GM12878 (cell line): ENCODE measurements at regions of chr2 and their contacts with region 1.

Region 1: GRCh38 chr2:126527836-126528507 is 128.0 kb upstream of the GYPC start:
- DNase-seq: peak; percentile 11
- ATAC-seq: peak; percentile 91
- H3K4me3 ChIP-seq: no peak overlapping the region
- H3K27ac ChIP-seq: no peak overlapping the region
- H3K4me1 ChIP-seq: no peaks in the 10 kb centered on the region
- H3K27me3 ChIP-seq: no peaks in the 10 kb centered on the region
- CTCF ChIP-seq: peak; percentile 62 to 72 (median 71)
- EP300 ChIP-seq: no peak
- POLR2A ChIP-seq: no peak
- RAD21 ChIP-seq: peak; percentile 91

Region 2: GRCh38 chr2:126444512-126444911 is 83.5 kb before region 1 on chr2:
- CTCF ChIA-PET with region 1: no interaction called
- POLR2A ChIA-PET with region 1: no interaction called
- RAD21 ChIA-PET with region 1: no interaction called
- SMC1A ChIA-PET with region 1: no interaction called
- in situ Hi-C with region 1: no loop called
- intact Hi-C with region 1: no loop called
- DNase-seq: no peak
- ATAC-seq: no peak
- H3K4me3 ChIP-seq: no peak overlapping the region
- H3K27ac ChIP-seq: no peak overlapping the region
- H3K4me1 ChIP-seq: no peaks in the 10 kb centered on the region
- H3K27me3 ChIP-seq: no peaks in the 10 kb centered on the region
- CTCF ChIP-seq: no peak
- EP300 ChIP-seq: no peak
- POLR2A ChIP-seq: no peak
- RAD21 ChIP-seq: no peak

Region 3: DNA sequence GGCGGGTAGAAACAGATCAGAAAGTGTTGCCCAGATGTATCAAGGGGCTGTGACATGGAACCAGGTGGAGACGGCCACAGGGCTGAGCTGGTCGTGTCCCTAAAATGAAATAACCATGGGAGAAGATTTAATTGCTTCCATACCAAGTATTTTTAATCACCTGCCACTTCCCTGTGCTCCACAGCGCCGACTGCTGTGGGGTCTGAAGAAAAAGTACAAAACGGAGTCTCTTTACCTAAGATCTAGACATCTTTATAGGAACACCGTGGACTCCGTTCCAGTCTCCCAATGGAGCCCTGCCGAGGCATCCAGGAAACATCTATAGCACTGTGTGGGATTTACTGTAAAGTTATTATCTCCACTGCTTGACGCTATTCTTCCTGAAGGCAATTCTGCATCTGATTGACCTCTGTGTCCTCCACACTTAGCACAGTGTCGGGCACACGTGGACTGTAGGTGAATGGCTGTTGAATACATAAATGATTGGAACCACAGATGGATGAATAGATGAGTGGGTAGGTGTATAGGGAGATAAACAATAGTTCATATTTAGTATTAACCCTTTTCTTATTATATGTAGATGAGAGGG is 106.4 kb after region 1 on chr2:
- CTCF ChIA-PET with region 1: interaction called, 84 read pairs
- POLR2A ChIA-PET with region 1: no interaction called
- RAD21 ChIA-PET with region 1: interaction called, 17 read pairs
- SMC1A ChIA-PET with region 1: interaction called, 40 read pairs
- in situ Hi-C with region 1: no loop called
- intact Hi-C with region 1: loop called (anchors 1 kb)
- DNase-seq: no peak
- ATAC-seq: peak; percentile 64
- H3K4me3 ChIP-seq: no peak overlapping the region
- H3K27ac ChIP-seq: no peak overlapping the region
- H3K4me1 ChIP-seq: no peaks in the 10 kb centered on the region
- H3K27me3 ChIP-seq: no peaks in the 10 kb centered on the region
- CTCF ChIP-seq: peak; percentile 61 to 69 (median 67); a peak in 5 of 6 replicates
- EP300 ChIP-seq: no peak
- POLR2A ChIP-seq: no peak
- RAD21 ChIP-seq: peak; percentile 65

Region 4: GRCh38 chr2:126657636-126658318 is 129.8 kb after region 1 on chr2:
- CTCF ChIA-PET with region 1: interaction called, 10 read pairs
- POLR2A ChIA-PET with region 1: no interaction called
- RAD21 ChIA-PET with region 1: no interaction called
- SMC1A ChIA-PET with region 1: interaction called, 7 read pairs
- in situ Hi-C with region 1: no loop called
- intact Hi-C with region 1: no loop called
- DNase-seq: peak; percentile 61
- ATAC-seq: peak; percentile 80
- H3K4me3 ChIP-seq: peak overlapping the region; percentile 97
- H3K27ac ChIP-seq: peak overlapping the region; percentile 96
- H3K4me1 ChIP-seq: peaks cover 40% of the 10 kb centered on the region
- H3K27me3 ChIP-seq: no peaks in the 10 kb centered on the region
- CTCF ChIP-seq: no peak
- EP300 ChIP-seq: 0 out of 4 replicates have a peak, but pooled peaks of 1 of the 2 experiments have one; percentile 24
- POLR2A ChIP-seq: peak; percentile 81
- RAD21 ChIP-seq: no peak

Region 5: DNA sequence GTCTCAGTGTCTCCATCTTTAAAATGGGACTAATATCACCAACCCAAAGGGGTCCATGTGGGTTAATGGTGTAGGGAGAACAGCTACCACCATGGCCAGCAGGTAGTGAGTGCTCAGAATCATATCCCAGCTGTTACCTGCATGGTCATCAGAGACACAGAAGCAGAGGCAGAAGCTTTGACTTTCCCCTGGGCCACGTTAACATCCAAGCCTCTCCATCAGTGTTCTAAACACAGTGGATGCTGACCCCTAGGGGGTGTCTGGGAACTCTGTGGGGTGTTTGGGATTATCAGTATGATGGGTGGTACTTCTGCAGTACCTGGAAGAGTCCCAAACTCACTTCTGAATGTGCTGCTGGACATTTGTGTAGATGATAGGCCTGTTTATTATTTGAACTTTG is 221.6 kb after region 1 on chr2:
- CTCF ChIA-PET with region 1: interaction called, 17 read pairs
- POLR2A ChIA-PET with region 1: no interaction called
- RAD21 ChIA-PET with region 1: interaction called, 18 read pairs
- SMC1A ChIA-PET with region 1: interaction called, 19 read pairs
- in situ Hi-C with region 1: no loop called
- intact Hi-C with region 1: loop called (anchors 1 kb)
- DNase-seq: no peak
- ATAC-seq: peak; percentile 53
- H3K4me3 ChIP-seq: no peak overlapping the region
- H3K27ac ChIP-seq: no peak overlapping the region
- H3K4me1 ChIP-seq: no peaks in the 10 kb centered on the region; the same call in 1 of the 2 replicates
- H3K27me3 ChIP-seq: no peaks in the 10 kb centered on the region
- CTCF ChIP-seq: peak in 2 of 3 experiments; percentile 40 to 42; a peak in 4 of 6 replicates
- EP300 ChIP-seq: no peak
- POLR2A ChIP-seq: no peak
- RAD21 ChIP-seq: peak; percentile 65

Region 6: GRCh38 chr2:126776692-126777619 is 249.0 kb after region 1 on chr2:
- CTCF ChIA-PET with region 1: interaction called, 124 read pairs
- POLR2A ChIA-PET with region 1: no interaction called
- RAD21 ChIA-PET with region 1: interaction called, 58 read pairs
- SMC1A ChIA-PET with region 1: interaction called, 58 read pairs
- in situ Hi-C with region 1: loop called (anchors 5 kb)
- intact Hi-C with region 1: loop called (anchors 1 kb)
- DNase-seq: peak; percentile 30
- ATAC-seq: peak; percentile 95
- H3K4me3 ChIP-seq: peak overlapping the region; percentile 70
- H3K27ac ChIP-seq: peak overlapping the region; percentile 25; the same call in 1 of the 2 replicates
- H3K4me1 ChIP-seq: peaks cover 6% of the 10 kb centered on the region
- H3K27me3 ChIP-seq: no peaks in the 10 kb centered on the region
- CTCF ChIP-seq: peak; percentile 96 to 99 (median 96); a peak in 5 of 6 replicates
- EP300 ChIP-seq: peak in 1 of 2 experiments; percentile 28; a peak in 1 of 4 replicates
- POLR2A ChIP-seq: no peak
- RAD21 ChIP-seq: peak; percentile 97